Activated CD4-positive, alpha-beta memory T cell treated with anti-CD3 and anti-CD28 coated beads for 36 hours (primary cell): ENCODE measurements at regions of chr2 and their contacts with region 1.

Region 1: DNA sequence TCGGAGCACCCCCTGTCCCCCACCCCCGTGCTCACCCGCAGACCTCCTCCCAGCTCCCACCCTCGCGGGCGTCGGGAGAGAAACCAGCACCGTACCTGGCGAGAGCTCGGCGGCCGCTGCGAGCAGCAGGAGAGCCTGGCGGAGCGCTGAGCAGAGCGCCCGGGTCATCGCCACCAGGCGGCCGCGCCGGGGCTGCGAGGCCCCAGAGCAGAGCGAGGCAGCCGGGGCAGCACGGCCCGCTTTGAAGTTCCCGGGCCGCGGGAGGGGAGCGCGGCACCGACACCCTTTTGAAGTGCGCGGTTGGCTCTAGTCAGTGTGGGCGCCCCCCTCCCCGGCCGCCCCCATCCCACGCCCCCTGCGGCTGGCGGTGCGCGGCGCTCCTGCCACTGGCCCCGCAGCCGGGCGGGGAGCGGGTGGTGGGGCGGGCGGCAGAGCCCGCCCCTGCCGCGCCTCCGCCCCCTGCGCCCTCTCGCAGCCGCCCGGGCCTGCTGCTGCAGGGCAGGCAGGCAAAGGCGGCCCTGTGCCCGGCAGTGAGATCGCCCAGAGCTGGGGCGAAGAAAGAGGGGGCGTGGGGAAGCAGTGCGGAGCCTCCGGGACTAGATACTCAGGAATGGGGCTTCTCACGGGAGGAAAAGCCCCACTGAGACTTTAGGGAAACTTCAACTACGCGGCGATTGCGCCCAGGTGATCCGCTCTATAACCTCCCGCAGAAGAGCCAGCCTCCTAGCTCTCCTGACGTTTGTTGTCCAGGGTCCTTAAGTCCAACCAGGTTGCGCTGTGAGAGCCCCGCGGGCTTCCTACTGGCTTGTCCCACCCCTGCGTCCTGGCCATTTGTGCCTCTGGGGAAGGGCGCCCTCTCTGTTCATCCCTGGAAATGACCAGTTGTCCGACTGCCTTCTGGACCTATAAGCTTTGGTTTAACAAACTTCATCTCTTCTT is at the start of gene ACVR1C:
- DNase-seq: peak; percentile 79
- H3K4me3 Mint-ChIP-seq: peak within 1 kb of the TSS; percentile 86
- H3K27ac Mint-ChIP-seq: peak within 1 kb of the TSS; percentile 9
- H3K4me1 Mint-ChIP-seq: peaks cover 31% of the 10 kb centered on the region
- H3K27me3 Mint-ChIP-seq: peaks cover 8% of the 10 kb centered on the region
- total RNA-seq, gene ACVR1C: 1.3 to 2.0 TPM

Region 2: GRCh38 chr2:157291009-157291408 is 337.7 kb before region 1 on chr2:
- CTCF ChIA-PET with region 1: no interaction called
- POLR2A ChIA-PET with region 1: no interaction called
- intact Hi-C with region 1: no loop called
- DNase-seq: no peak
- H3K4me3 Mint-ChIP-seq: no peak overlapping the region
- H3K27ac Mint-ChIP-seq: no peak overlapping the region
- H3K4me1 Mint-ChIP-seq: no peaks in the 10 kb centered on the region
- H3K27me3 Mint-ChIP-seq: peaks cover 3% of the 10 kb centered on the region

Region 3: GRCh38 chr2:157492189-157492773 is 136.5 kb before region 1 on chr2:
- CTCF ChIA-PET with region 1: interaction called, 22 read pairs
- POLR2A ChIA-PET with region 1: no interaction called
- intact Hi-C with region 1: loop called (anchors 2 kb)
- DNase-seq: peak; percentile 83
- H3K4me3 Mint-ChIP-seq: no peak overlapping the region
- H3K27ac Mint-ChIP-seq: no peak overlapping the region
- H3K4me1 Mint-ChIP-seq: peaks cover 55% of the 10 kb centered on the region
- H3K27me3 Mint-ChIP-seq: no peaks in the 10 kb centered on the region

Region 4: DNA sequence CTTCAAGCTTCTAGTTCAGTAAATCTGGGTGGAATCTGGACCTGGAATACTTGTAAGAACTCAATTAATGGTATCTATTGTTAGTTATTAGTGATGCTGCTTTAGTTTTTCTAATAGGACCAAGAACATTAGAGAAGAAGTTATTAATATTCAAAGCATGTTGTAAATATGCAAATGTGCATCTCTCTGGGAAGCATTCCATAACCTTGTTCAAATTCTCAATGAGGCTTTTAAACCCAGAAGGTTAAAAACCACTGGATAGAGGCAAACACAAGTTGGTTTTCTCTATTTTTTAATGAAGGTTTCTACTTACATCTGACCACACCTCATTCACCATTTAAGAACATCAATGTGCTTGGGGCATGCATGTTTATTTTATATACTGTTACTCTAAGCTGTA is 16.0 kb after region 1 on chr2:
- CTCF ChIA-PET with region 1: interaction called, 14 read pairs
- POLR2A ChIA-PET with region 1: no interaction called
- intact Hi-C with region 1: no loop called
- DNase-seq: no peak
- H3K4me3 Mint-ChIP-seq: no peak overlapping the region
- H3K27ac Mint-ChIP-seq: no peak overlapping the region
- H3K4me1 Mint-ChIP-seq: no peaks in the 10 kb centered on the region
- H3K27me3 Mint-ChIP-seq: no peaks in the 10 kb centered on the region

Region 5: GRCh38 chr2:157940024-157940423 is 311.3 kb after region 1 on chr2:
- CTCF ChIA-PET with region 1: no interaction called
- POLR2A ChIA-PET with region 1: no interaction called
- intact Hi-C with region 1: no loop called
- DNase-seq: no peak
- H3K4me3 Mint-ChIP-seq: no peak overlapping the region
- H3K27ac Mint-ChIP-seq: no peak overlapping the region
- H3K4me1 Mint-ChIP-seq: peaks cover 10% of the 10 kb centered on the region
- H3K27me3 Mint-ChIP-seq: no peaks in the 10 kb centered on the region

Region 6: DNA sequence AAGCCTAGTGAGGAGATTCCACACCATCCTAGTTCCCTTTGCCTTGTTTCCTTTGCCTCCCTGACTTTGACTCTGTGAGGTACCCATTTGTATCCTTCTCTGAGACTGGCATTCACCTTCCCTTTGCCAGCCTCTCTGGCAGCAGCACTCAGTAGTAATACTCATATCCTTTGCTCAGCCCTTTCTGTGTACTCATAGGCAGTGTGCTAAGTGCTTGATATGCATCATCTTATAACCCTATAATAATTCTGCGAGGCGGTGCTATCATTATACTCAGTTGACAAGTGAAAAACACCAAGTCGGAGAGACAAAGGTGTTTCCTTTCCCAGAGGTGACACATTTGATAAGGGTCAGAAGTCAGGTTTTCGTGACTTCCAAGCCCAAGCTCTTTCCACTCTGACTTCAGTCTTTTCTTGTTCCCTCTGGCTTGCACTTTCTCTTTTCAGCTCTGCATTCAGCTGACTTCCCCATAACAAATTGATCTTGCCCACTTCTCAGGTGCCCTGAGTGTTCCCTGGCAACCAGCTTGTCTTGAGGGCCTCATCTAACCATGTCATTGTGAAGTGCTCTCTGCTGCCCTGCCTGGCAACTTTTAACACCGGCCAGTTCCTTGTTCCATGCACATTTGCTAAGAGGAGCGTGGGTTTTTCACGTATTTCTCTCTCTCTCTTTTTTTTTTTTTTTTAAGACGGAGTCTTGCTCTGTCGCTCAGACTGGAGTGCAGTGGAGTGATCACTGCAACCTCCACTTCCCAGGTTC is 378.4 kb after region 1 on chr2:
- CTCF ChIA-PET with region 1: interaction called, 9 read pairs
- POLR2A ChIA-PET with region 1: no interaction called
- intact Hi-C with region 1: loop called (anchors 2 kb)
- DNase-seq: peak; percentile 25
- H3K4me3 Mint-ChIP-seq: no peak overlapping the region
- H3K27ac Mint-ChIP-seq: no peak overlapping the region
- H3K4me1 Mint-ChIP-seq: peaks cover 6% of the 10 kb centered on the region
- H3K27me3 Mint-ChIP-seq: peaks cover 2% of the 10 kb centered on the region

Region 7: GRCh38 chr2:158276619-158277471 is 648.1 kb after region 1 on chr2:
- CTCF ChIA-PET with region 1: no interaction called
- POLR2A ChIA-PET with region 1: no interaction called
- intact Hi-C with region 1: no loop called
- DNase-seq: no peak
- H3K4me3 Mint-ChIP-seq: no peak overlapping the region
- H3K27ac Mint-ChIP-seq: no peak overlapping the region
- H3K4me1 Mint-ChIP-seq: no peaks in the 10 kb centered on the region
- H3K27me3 Mint-ChIP-seq: peaks cover 1% of the 10 kb centered on the region